H1 (cell line): ENCODE measurements at regions of chr6 and their contacts with region 1.

Region 1: DNA sequence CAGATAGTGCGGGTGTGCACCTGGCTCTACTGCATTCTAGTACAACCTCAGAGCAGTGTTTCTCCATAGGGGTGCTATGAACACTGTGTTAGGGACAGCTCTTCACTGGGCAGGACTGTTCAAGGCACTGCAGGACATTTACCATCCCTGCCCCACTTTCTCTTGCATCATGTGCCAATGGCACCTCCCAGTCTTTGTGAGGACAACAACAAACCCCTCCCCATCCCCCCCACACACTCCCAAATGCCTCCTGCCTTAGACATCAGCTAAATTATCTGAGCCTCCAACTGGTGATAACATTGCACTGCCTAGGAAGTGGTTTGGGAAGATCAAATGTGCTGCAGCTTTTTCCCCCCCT is 98.9 kb downstream of the FYN start:
- DNase-seq: no peak
- H3K4me3 ChIP-seq: no peak overlapping the region
- H3K27ac ChIP-seq: no peak overlapping the region
- H3K4me1 ChIP-seq: peaks cover 0 to 12% (median 6%) of the 10 kb centered on the region in 4 experiments; a peak in 4 of 7 replicates
- H3K27me3 ChIP-seq: no peaks in the 10 kb centered on the region
- CTCF ChIP-seq: no peak
- EP300 ChIP-seq: no peak
- POLR2A ChIP-seq: no peak
- RAD21 ChIP-seq: no peak

Region 2: DNA sequence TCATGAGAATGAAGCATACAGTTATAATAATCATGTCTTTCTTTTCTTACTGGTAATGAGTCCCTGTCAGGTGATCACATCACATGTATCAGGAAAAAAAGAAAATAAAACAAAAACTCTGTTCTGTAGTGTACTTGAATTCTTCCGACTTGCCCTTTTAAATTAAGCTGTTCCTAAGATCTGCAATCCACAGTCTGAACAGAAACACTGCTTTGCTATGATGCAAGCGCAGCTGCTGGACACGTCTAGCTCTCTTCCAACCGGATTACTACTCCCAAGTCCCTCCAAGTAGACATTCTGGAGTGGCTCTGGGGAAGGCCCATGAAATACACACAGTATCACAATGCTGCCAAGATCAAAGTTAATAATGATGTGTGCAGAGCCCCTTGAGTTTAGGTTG is 15.3 kb after region 1 on chr6:
- CTCF ChIA-PET with region 1: interaction called, 12 read pairs
- POLR2A ChIA-PET with region 1: interaction called, 3 read pairs
- DNase-seq: no peak
- H3K4me3 ChIP-seq: no peak overlapping the region
- H3K27ac ChIP-seq: no peak overlapping the region
- H3K4me1 ChIP-seq: peaks cover 0 to 6% (median 3%) of the 10 kb centered on the region in 4 experiments; a peak in 2 of 7 replicates
- H3K27me3 ChIP-seq: no peaks in the 10 kb centered on the region
- CTCF ChIP-seq: no peak
- EP300 ChIP-seq: no peak
- POLR2A ChIP-seq: no peak
- RAD21 ChIP-seq: no peak